CD4-positive, alpha-beta memory T cell (primary cell): ENCODE measurements at regions of chr13 and their contacts with region 1.

Region 1: GRCh38 chr13:30865123-30866049 is 40.7 kb upstream of the MEDAG start:
- DNase-seq: peak in 4 of 5 donors; percentile 37 to 50 (median 44)
- H3K4me3 ChIP-seq: no peak overlapping the region
- H3K4me3 Mint-ChIP-seq: peak overlapping the region in 1 of 8 donors; percentile 1
- H3K27ac ChIP-seq: no peak overlapping the region
- H3K27ac Mint-ChIP-seq: peak overlapping the region in 1 of 7 donors; percentile 90
- H3K4me1 ChIP-seq: no peaks in the 10 kb centered on the region
- H3K4me1 Mint-ChIP-seq: peaks cover 0 to 6% (median 4%) of the 10 kb centered on the region in 4 donors
- H3K27me3 ChIP-seq: no peaks in the 10 kb centered on the region
- H3K27me3 Mint-ChIP-seq: peaks cover 7% of the 10 kb centered on the region in 2 donors

Region 2: DNA sequence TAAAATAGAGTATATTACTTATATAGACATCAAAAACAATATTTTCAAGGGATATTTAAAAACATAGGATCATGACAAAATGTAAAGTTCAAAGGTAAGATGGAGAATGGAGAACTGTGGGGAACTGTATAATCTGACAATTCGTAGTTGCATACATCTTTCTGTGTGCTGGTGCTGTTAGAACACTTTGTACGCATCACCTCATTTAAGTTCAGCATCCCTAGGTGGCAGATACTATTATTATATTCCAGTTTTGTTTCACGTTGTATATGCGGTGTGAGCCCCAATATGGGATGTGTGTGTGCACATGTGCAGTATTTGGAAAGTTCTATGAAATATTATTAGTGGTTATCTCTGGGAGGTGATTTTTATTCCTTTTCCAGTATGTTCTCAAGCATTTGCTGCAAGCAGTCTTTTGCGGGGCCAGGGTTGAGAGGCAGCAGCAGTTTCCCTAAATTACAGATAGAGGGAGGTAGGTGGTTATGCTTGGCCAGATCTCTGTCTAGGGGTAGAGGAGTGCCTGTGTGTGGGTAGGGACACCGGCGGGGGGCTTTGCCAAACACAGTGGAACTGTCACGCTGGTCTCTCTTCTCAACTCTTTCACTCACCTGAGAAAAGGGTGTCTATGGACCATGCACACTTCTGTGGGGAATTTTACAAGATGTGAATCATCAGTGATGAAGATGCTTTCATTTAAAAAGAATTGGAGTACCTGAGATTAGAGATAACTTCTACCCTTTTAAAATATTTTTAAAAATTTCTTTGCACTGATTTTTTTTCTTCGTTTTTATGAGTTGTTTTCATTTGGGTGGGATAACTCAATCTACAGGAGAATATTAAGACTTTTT is 185.7 kb before region 1 on chr13:
- CTCF ChIA-PET with region 1: no interaction called
- POLR2A ChIA-PET with region 1: no interaction called
- intact Hi-C with region 1: loop called (anchors 1 kb)
- DNase-seq: peak; percentile 42 to 52 (median 47)
- H3K4me3 ChIP-seq: no peak overlapping the region
- H3K4me3 Mint-ChIP-seq: peak overlapping the region in 1 of 8 donors; percentile 30
- H3K27ac ChIP-seq: no peak overlapping the region
- H3K27ac Mint-ChIP-seq: peak overlapping the region in 6 of 7 donors; percentile 3 to 46 (median 16)
- H3K4me1 ChIP-seq: no peaks in the 10 kb centered on the region
- H3K4me1 Mint-ChIP-seq: peaks cover 8 to 11% (median 11%) of the 10 kb centered on the region in 4 donors
- H3K27me3 ChIP-seq: no peaks in the 10 kb centered on the region
- H3K27me3 Mint-ChIP-seq: no peaks in the 10 kb centered on the region

Region 3: DNA sequence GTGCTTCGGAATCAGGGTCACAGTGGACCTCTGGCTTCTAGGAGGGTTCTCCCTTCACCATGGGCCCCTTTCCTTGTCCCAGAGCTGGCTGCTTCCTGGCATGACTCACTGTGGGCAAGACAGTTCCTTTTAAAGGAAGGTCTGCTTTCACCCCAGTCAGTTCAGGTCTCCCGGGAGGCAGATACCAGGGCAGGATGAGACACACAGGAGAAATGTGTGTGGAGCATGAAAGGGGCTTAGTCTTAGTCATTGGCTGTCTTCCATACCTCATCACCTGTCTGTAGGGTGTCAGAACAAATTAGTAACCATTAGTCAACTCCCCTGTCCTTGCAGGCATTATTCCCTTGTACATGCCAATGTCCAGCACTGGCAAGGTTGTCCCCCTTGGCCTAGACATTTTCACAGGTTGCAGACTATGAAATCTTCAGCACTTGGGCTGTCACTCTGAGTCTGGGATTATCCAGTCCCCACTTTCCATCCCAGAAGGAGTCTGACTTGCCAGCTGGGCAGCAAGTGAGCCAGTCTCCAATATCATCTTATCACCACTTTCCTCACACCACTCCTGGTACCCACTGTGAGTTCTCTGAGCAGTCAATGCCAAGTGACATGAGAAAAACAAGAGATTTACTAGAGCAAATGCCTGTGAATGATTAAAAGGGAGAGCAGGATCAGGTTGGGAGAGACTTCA is 36.1 kb before region 1 on chr13:
- CTCF ChIA-PET with region 1: no interaction called
- POLR2A ChIA-PET with region 1: no interaction called
- intact Hi-C with region 1: no loop called
- DNase-seq: no peak
- H3K4me3 ChIP-seq: no peak overlapping the region
- H3K4me3 Mint-ChIP-seq: no peak overlapping the region
- H3K27ac ChIP-seq: no peak overlapping the region
- H3K27ac Mint-ChIP-seq: peak overlapping the region in 1 of 7 donors; percentile 35
- H3K4me1 ChIP-seq: no peaks in the 10 kb centered on the region
- H3K4me1 Mint-ChIP-seq: no peaks in the 10 kb centered on the region
- H3K27me3 ChIP-seq: no peaks in the 10 kb centered on the region
- H3K27me3 Mint-ChIP-seq: peaks cover 4 to 10% of the 10 kb centered on the region in 2 donors

Region 4: DNA sequence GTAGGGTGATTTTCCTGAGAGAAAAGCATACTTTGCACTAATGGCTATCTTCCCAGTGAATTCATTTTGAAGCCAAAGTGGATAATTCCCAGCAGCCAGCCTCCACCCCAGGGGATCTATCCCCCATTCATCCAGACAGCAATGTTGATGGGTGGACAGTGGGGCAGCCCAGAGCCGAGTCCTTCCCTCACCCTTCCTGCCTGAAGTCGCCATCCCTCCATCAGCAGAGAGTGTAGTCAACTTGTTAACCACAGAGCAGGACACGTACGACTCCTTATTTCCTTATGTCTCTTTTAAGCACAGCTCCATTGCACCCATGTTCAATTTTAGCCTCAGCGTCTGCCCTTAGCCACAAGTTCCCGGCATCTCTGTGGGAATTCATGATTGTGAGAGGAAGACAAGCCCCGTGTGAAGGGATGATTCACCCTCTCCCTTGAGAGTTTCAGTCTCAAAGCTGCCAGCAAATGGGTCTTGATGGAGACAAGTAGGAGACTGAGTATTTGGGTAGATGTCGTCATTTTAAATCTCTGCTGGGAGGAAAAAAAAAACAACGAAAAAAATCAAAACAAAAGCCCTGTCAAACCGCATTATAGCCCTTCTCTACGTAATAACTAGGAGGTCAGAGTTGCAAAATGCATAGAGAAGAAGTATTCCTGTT is 17.6 kb before region 1 on chr13:
- CTCF ChIA-PET with region 1: interaction called, 19 read pairs
- POLR2A ChIA-PET with region 1: no interaction called
- intact Hi-C with region 1: no loop called
- DNase-seq: no peak
- H3K4me3 ChIP-seq: no peak overlapping the region
- H3K4me3 Mint-ChIP-seq: peak overlapping the region in 7 of 8 donors; percentile 15 to 67 (median 55)
- H3K27ac ChIP-seq: no peak overlapping the region
- H3K27ac Mint-ChIP-seq: peak overlapping the region in 4 of 7 donors; percentile 8 to 61 (median 34)
- H3K4me1 ChIP-seq: peaks cover 28% of the 10 kb centered on the region
- H3K4me1 Mint-ChIP-seq: peaks cover 15 to 21% (median 18%) of the 10 kb centered on the region in 4 donors
- H3K27me3 ChIP-seq: no peaks in the 10 kb centered on the region
- H3K27me3 Mint-ChIP-seq: peaks cover 0 to 2% of the 10 kb centered on the region in 2 donors